ENCODE measurements at regions of chr19 and their contacts with region 1.

Region 1: DNA sequence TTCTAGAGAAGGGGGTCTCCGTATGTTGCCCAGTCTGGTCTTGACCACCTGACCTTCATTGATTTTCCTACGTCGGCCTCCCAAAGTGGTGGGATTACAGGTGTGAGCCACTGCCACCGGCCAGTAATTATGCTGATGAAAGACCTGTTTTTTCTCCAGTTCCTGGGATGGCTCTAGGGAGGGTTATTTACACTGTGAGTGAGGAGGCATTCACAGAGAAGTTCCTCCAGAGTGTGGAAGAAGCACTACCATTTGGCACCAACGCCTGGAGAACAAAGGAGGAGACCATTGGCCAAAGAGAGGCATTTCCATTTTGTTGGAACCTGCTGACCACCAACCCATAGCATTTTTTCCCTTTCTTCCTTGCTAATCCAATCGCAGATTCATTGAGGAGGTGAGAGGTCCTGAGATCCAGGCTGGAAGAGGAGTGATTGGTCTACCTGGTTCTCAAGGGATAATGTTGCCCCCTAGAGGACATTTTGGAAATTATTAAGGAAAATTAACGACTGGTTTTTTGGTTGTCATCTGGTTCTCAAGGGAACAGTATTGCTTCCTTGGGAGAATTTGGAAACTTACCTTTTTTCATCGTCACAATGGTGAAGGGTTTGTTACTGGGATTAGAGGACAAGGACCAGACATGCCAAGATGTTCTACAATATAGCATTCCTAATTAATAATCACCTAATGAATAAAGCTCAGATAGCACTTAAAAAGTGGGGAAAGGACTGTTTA is 5.5 kb upstream of the SAE1 start:
- DNase-seq: peak; percentile 16

Region 2: GRCh38 chr19:47035127-47036096 is 89.7 kb before region 1 on chr19:
- intact Hi-C with region 1: loop called in 1 of 2 experiments (anchors 10 kb)
- DNase-seq: peak; percentile 94

Region 3: GRCh38 chr19:47075179-47075810 is 49.8 kb before region 1 on chr19:
- intact Hi-C with region 1: loop called (anchors 2 to 5 kb)
- DNase-seq: peak; percentile 87

Region 4: DNA sequence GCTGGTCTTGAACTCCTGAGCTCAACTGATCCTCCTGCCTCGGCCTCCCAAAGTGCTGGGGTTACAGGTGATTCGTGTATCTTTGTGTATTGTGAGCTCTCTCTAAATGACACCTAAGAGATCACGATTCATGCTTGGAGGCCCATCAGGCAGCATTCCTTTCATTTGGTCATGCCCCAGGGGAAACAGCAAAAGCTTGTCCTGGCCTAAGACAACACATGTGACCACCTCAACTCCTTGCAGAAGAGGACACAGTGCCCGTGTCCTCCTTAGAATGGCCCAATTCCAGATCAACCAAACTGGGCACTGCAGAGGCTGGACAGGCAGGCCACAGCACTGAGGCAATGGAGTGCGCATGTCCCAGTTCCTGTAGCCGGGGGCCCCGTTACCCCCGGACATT is 44.0 kb before region 1 on chr19:
- intact Hi-C with region 1: loop called (anchors 2 to 5 kb)
- DNase-seq: no peak

Region 5: DNA sequence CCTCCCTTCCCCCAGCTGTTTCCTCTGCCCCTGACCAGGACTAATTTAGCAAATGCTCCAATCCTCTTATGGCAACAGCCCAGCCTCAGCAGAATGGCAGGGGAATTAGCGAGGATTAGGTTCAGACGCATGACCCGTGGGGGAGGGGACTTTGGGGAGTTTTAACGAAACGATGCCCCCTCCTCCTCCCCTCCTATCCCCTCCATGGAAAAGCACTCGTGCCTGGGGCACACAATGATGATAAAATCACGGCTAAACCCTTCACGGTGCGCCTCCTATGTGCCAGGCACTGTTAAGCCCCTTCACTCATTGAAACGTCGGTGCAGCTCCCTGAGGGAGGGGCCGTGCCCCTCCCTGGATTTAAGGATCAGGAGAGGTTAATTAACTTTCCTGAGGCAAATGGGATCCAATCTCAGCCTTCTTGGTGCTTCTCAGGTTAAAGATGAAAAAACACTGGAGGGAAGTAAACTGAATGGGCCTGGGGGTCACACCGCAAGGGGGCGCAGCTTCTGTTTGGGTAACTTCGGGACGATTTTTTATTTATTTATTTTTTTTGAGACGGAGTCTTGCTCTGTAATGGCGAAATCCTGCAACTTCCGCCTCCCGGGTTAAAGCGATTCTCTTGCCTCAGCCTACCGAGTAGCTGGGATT is 723.8 kb after region 1 on chr19:
- intact Hi-C with region 1: no loop called
- DNase-seq: no peak

Measured in posterior vena cava (tissue), 2 donors.